MCF 10A (cell line): ENCODE measurements at regions of chr1 and their contacts with region 1.

Region 1: GRCh38 chr1:19311959-19312781 is at the starts of genes AKR7A2 and SLC66A1:
- DNase-seq: peak; percentile 92
- H3K4me3 Mint-ChIP-seq: peak within 1 kb of the TSS; percentile 77
- H3K27ac Mint-ChIP-seq: peak within 1 kb of the TSS; percentile 84
- H3K4me1 Mint-ChIP-seq: peaks cover 27% of the 10 kb centered on the region
- H3K27me3 Mint-ChIP-seq: no peaks in the 10 kb centered on the region
- CTCF ChIP-seq: peak; percentile 8
- total RNA-seq, gene AKR7A2: 26.7 and 28.7 TPM in 2 replicates
- total RNA-seq, gene SLC66A1: 16.2 and 20.2 TPM in 2 replicates

Region 2: DNA sequence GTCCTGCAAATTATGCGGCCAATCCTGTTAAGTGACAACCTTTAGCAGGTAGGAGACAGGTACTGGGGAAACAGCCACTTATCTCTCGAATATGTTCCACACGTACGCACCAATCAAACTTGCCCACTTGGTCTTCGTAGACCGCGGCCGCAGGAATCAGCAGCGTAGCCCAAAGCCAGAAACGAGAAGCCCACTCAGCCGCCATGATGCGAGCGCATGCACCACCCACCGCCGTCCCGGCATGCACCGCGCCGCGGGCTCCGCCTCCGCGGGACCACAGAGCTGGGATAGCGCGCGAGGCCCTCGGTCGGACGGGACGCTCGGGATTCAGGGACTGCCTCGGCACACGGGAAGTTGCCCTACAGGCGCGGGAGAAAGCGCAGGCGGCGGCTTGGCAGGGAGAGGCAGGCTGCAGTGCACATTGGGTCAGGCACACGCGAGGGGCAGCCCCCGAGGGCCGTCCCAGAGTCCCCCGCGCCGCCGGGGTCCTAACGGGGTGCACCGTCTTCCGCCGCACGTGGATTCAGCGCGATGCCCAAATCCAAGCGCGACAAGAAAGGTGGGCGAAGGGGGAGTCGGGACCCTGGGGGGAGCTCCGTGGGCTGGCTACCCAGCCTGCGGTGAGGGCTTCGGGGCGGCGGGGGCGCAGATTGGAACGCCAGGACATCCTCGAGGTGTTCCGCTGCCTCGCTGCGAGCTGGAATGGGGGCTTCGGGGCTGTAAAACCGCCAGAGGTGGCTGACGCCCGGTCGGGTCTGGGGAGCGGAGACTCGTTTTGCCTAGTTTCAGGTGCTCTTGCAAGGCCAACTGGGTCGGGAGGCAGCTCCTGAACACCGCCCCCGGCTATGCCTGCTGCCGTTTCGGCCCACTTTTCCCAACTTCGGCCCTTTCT is 60.6 kb before region 1 on chr1 and contains the starts of genes EMC1 and MRTO4:
- CTCF ChIA-PET with region 1: interaction called, 4 read pairs
- POLR2A ChIA-PET with region 1: interaction called, 24 read pairs
- intact Hi-C with region 1: loop called (anchors 1 kb)
- DNase-seq: peak; percentile 81
- H3K4me3 Mint-ChIP-seq: peak within 1 kb of the TSS; percentile 95
- H3K27ac Mint-ChIP-seq: peak within 1 kb of the TSS; percentile 85
- H3K4me1 Mint-ChIP-seq: peaks cover 11% of the 10 kb centered on the region
- H3K27me3 Mint-ChIP-seq: no peaks in the 10 kb centered on the region
- CTCF ChIP-seq: no peak
- total RNA-seq, gene EMC1: 75.9 and 77.2 TPM in 2 replicates
- total RNA-seq, gene MRTO4: 37.3 and 46.0 TPM in 2 replicates

Region 3: DNA sequence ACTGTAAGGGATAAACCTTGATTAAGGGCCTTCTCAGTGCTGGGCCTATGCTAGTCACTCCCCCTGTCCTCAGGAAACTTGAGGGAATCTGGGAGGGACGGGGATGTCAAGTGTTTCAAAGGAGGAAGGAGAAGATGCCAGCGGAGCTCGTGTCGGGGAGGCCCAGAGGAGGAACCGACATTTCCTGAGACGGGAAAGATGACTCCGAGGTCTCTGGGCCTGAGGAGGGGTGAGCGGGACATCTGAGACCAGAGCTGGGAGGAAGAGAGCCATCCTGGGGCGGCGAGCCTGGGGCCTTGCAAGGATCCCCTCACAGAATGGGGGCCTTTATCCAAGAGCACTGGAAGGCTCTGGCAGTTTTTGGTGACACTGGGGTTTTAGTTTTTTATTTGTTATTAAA is 10.3 kb after region 1 on chr1:
- CTCF ChIA-PET with region 1: no interaction called
- POLR2A ChIA-PET with region 1: interaction called, 10 read pairs
- intact Hi-C with region 1: no loop called
- DNase-seq: no peak
- H3K4me3 Mint-ChIP-seq: no peak overlapping the region
- H3K27ac Mint-ChIP-seq: no peak overlapping the region
- H3K4me1 Mint-ChIP-seq: no peaks in the 10 kb centered on the region
- H3K27me3 Mint-ChIP-seq: no peaks in the 10 kb centered on the region
- CTCF ChIP-seq: no peak

Region 4: DNA sequence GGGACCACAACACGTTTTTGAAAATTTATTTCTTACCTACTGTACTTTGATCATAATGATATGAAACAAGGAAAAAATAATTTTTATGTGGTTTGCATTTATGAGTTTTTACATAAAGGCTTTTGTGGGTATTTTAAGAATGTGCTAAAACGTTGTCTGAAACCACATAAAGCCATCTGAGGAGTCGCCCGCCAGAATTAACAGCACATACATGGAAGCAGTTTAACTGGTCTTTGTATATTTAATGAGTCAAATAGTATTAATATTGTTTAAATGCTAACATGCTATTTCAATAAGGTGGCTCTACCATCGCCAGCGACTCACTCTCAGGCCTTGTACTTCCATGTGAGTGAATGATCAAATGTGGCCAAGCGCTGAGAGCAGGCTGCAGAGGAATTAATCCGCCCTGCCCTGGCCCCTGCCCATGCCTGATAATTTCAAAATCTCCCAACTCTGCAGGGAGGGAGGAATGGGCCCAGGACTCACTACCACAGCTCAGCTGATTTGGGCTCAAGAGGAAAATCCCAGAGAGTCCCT is 49.5 kb after region 1 on chr1:
- CTCF ChIA-PET with region 1: no interaction called
- POLR2A ChIA-PET with region 1: interaction called, 13 read pairs
- intact Hi-C with region 1: no loop called
- DNase-seq: peak; percentile 31
- H3K4me3 Mint-ChIP-seq: peak overlapping the region; percentile 62
- H3K27ac Mint-ChIP-seq: peak overlapping the region; percentile 78
- H3K4me1 Mint-ChIP-seq: peaks cover 8% of the 10 kb centered on the region
- H3K27me3 Mint-ChIP-seq: no peaks in the 10 kb centered on the region
- CTCF ChIP-seq: no peak